Transverse colon (tissue), 4 donors: ENCODE measurements at regions of chr11 and their contacts with region 1.

Region 1: DNA sequence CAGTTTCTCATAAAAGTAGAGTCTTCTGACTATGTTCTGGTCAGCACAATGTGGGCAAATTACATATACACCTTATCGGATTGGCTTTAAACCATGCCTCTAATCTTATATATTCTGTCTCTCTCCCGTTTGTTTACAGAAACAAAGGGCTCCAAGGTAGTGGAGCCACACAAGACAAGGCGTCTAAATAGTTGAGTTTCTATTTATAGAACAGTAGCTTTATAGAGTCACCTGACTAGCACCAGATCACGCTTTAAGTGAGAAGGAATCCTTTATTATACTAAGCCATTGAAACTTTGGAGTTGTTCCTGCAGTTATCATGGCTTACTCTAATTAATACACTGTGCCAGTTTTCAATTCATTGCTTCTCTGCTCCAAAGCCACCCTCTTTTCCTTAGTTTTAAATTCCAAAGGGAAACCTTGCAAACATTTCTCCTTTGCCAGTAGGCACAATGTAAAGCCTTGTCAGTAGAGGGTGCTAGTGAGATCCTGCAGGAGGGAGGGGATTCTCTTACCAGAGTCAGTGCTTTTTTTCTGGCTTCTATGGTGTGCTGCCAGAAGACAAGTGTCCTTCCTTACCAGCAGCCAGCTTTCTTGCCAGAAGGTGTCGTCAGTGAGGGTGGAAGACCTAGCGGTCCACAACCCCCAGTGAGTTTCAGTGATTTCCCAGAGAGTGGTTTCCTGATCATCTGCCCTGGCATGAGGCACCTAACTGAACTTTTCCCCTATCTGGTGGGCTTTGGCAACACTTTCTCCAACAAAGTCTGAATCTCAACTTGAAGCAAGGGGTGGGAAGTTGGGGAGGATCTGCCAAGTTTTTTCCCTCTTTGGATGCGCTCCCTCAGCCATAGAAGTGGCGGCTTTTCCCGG is 71.7 kb downstream of the RAB38 start:
- DNase-seq: peak; percentile 14
- H3K4me3 ChIP-seq: no peak overlapping the region
- H3K27ac ChIP-seq: peak overlapping the region in 1 of 4 donors; percentile 3
- H3K4me1 ChIP-seq: peaks cover 0 to 18% (median 10%) of the 10 kb centered on the region in 4 donors
- H3K27me3 ChIP-seq: no peaks in the 10 kb centered on the region
- CTCF ChIP-seq: peak; percentile 22 to 46 (median 43)
- EP300 ChIP-seq: no peak
- POLR2A ChIP-seq: no peak

Region 2: GRCh38 chr11:86676548-86677154 is 1426.9 kb before region 1 on chr11:
- in situ Hi-C with region 1: no loop called
- intact Hi-C with region 1: no loop called
- DNase-seq: no peak
- H3K4me3 ChIP-seq: no peak overlapping the region
- H3K27ac ChIP-seq: peak overlapping the region; percentile 92 to 93 (median 92)
- H3K4me1 ChIP-seq: peaks cover 18 to 51% (median 37%) of the 10 kb centered on the region in 4 donors
- H3K27me3 ChIP-seq: no peaks in the 10 kb centered on the region
- CTCF ChIP-seq: peak in 3 of 5 experiments; percentile 26 to 50 (median 34)
- EP300 ChIP-seq: no peak
- POLR2A ChIP-seq: no peak

Region 3: GRCh38 chr11:88535916-88536547 is 432.5 kb after region 1 on chr11:
- in situ Hi-C with region 1: loop called in 1 of 4 experiments (anchors 10 kb)
- intact Hi-C with region 1: no loop called
- DNase-seq: no peak
- H3K4me3 ChIP-seq: no peak overlapping the region
- H3K27ac ChIP-seq: peak overlapping the region in 2 of 4 donors; percentile 3 to 30
- H3K4me1 ChIP-seq: peaks cover 0 to 4% (median 0%) of the 10 kb centered on the region in 4 donors
- H3K27me3 ChIP-seq: no peaks in the 10 kb centered on the region
- CTCF ChIP-seq: no peak
- EP300 ChIP-seq: peak; percentile 5
- POLR2A ChIP-seq: no peak